Activated B cell treated with CpG ODN at 0.5 μM for 24 hours (primary cell): ENCODE measurements at regions of chr10 and their contacts with region 1.

Region 1: GRCh38 chr10:114479307-114479706 is 75.0 kb upstream of the AFAP1L2 start:
- DNase-seq: no peak
- ATAC-seq: no peak
- H3K4me3 Mint-ChIP-seq: no peak overlapping the region
- H3K27ac Mint-ChIP-seq: no peak overlapping the region
- H3K4me1 Mint-ChIP-seq: peaks cover 21% of the 10 kb centered on the region
- H3K27me3 Mint-ChIP-seq: no peaks in the 10 kb centered on the region
- CTCF ChIP-seq: no peak

Region 2: GRCh38 chr10:114492351-114493037 is 13.2 kb after region 1 on chr10:
- CTCF ChIA-PET with region 1: no interaction called
- POLR2A ChIA-PET with region 1: no interaction called
- intact Hi-C with region 1: loop called (anchors 2 kb)
- DNase-seq: no peak
- ATAC-seq: no peak
- H3K4me3 Mint-ChIP-seq: peak overlapping the region; percentile 39
- H3K27ac Mint-ChIP-seq: peak overlapping the region; percentile 50
- H3K4me1 Mint-ChIP-seq: peaks cover 54% of the 10 kb centered on the region
- H3K27me3 Mint-ChIP-seq: no peaks in the 10 kb centered on the region
- CTCF ChIP-seq: no peak

Region 3: GRCh38 chr10:115026056-115026745 is 546.9 kb after region 1 on chr10:
- CTCF ChIA-PET with region 1: no interaction called
- POLR2A ChIA-PET with region 1: no interaction called
- intact Hi-C with region 1: no loop called
- DNase-seq: no peak
- ATAC-seq: no peak
- H3K4me3 Mint-ChIP-seq: no peak overlapping the region
- H3K27ac Mint-ChIP-seq: no peak overlapping the region
- H3K4me1 Mint-ChIP-seq: peaks cover 6% of the 10 kb centered on the region
- H3K27me3 Mint-ChIP-seq: no peaks in the 10 kb centered on the region
- CTCF ChIP-seq: no peak